GM12878 (cell line): ENCODE measurements at regions of chr1 and their contacts with region 1.

Region 1: GRCh38 chr1:41633724-41634123 is 149.2 kb upstream of the EDN2 start:
- DNase-seq: no peak
- ATAC-seq: no peak
- H3K4me3 ChIP-seq: no peak overlapping the region
- H3K27ac ChIP-seq: no peak overlapping the region
- H3K4me1 ChIP-seq: peaks cover 13% of the 10 kb centered on the region
- H3K27me3 ChIP-seq: no peaks in the 10 kb centered on the region
- CTCF ChIP-seq: no peak
- EP300 ChIP-seq: no peak
- POLR2A ChIP-seq: no peak
- RAD21 ChIP-seq: no peak

Region 2: GRCh38 chr1:41656068-41656467 is 22.3 kb after region 1 on chr1:
- CTCF ChIA-PET with region 1: interaction called, 4 read pairs
- POLR2A ChIA-PET with region 1: interaction called, 5 read pairs
- RAD21 ChIA-PET with region 1: interaction called, 83 read pairs
- SMC1A ChIA-PET with region 1: interaction called, 102 read pairs
- in situ Hi-C with region 1: no loop called
- intact Hi-C with region 1: no loop called
- DNase-seq: no peak
- ATAC-seq: peak; percentile 42
- H3K4me3 ChIP-seq: no peak overlapping the region
- H3K27ac ChIP-seq: no peak overlapping the region
- H3K4me1 ChIP-seq: peaks cover 16% of the 10 kb centered on the region
- H3K27me3 ChIP-seq: no peaks in the 10 kb centered on the region
- CTCF ChIP-seq: no peak
- EP300 ChIP-seq: no peak
- POLR2A ChIP-seq: no peak
- RAD21 ChIP-seq: no peak